ENCODE measurements at regions of chr1 and their contacts with region 1.

Region 1: DNA sequence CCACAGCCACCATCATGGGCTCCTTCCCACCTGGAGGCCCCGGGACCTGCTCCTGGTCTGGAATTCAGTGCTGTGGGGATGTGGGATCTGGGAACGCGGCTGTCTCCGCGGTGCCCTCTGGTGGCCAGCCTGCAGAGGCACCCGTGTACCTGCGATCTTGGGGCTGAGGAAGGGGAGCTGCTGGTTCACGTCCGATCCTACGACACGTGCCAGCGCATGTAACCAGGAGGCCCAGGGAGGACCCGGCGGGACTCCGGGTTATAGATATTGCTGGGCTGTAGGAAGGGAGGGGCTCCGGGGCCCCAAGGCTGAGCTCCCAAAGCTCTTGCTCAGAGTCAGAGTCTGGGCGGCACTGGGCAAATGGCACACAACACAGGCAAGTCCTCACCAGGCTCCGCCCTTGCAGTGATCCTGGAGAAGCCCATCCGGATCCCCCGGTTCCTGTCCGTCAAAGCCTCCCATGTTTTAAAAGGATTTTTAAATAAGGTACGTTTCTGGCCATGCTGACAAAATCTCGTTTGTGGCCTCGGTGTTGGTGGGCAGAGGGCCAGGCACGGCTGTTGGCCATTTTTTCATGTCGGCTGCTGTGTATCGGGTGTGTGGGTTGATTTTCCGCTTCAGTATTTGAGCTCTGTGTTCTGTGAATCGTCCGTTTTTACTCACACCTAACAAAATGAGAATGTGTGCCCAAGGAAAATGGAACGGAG is 20.1 kb downstream of the FAAP20 start:
- DNase-seq: peak; percentile 94
- H3K4me3 ChIP-seq: no peak overlapping the region
- H3K27ac ChIP-seq: no peak overlapping the region
- H3K4me1 ChIP-seq: peaks cover 0 to 2% of the 10 kb centered on the region in 2 experiments; a peak in 1 of 4 replicates
- H3K27me3 ChIP-seq: no peaks in the 10 kb centered on the region
- CTCF ChIP-seq: peak; percentile 80
- EP300 ChIP-seq: no peak
- RAD21 ChIP-seq: peak; percentile 62

Region 2: DNA sequence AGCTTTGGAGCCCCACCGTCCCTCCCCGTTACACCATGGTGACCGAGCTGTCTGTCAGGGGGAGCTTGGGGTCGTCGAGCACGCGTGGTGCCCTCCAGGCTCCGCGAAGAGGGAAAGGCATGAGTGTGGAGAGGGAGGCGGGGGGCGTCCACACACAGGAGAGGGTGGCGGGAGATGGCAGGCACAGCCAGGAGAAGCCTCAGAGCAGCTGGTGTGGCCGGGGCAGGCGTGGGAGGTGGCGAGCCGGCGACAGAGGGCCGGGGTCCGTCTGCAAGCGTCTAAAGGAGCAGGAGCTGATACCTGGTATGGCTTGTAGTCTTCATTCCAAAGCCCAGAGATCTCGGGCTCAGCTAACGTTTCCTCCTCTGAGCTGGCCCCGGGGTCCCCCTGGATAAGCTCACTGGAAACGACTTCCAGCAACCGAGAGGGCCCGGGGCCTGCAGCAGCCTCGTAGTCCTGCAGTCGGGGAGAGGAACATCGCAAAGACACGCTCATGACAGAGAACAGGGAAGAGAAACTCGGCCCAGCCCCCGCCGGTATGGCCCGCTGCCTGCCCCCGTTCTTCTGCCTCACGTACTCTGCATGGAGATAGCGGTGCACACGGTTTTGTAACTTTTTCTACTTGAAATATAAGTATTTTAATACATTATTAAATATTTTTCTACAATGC is 208.3 kb before region 1 on chr1:
- CTCF ChIA-PET with region 1: no interaction called
- POLR2A ChIA-PET with region 1: no interaction called
- DNase-seq: no peak
- H3K4me3 ChIP-seq: no peak overlapping the region
- H3K27ac ChIP-seq: no peak overlapping the region
- H3K4me1 ChIP-seq: no peaks in the 10 kb centered on the region
- H3K27me3 ChIP-seq: no peaks in the 10 kb centered on the region
- CTCF ChIP-seq: no peak
- EP300 ChIP-seq: no peak
- RAD21 ChIP-seq: no peak

Region 3: GRCh38 chr1:2112280-2112701 is 62.2 kb before region 1 on chr1:
- CTCF ChIA-PET with region 1: interaction called, 10 read pairs
- POLR2A ChIA-PET with region 1: no interaction called
- DNase-seq: no peak
- H3K4me3 ChIP-seq: no peak overlapping the region
- H3K27ac ChIP-seq: no peak overlapping the region
- H3K4me1 ChIP-seq: no peaks in the 10 kb centered on the region; a peak in 1 of 4 replicates
- H3K27me3 ChIP-seq: no peaks in the 10 kb centered on the region
- CTCF ChIP-seq: no peak
- EP300 ChIP-seq: no peak
- RAD21 ChIP-seq: no peak

Region 4: DNA sequence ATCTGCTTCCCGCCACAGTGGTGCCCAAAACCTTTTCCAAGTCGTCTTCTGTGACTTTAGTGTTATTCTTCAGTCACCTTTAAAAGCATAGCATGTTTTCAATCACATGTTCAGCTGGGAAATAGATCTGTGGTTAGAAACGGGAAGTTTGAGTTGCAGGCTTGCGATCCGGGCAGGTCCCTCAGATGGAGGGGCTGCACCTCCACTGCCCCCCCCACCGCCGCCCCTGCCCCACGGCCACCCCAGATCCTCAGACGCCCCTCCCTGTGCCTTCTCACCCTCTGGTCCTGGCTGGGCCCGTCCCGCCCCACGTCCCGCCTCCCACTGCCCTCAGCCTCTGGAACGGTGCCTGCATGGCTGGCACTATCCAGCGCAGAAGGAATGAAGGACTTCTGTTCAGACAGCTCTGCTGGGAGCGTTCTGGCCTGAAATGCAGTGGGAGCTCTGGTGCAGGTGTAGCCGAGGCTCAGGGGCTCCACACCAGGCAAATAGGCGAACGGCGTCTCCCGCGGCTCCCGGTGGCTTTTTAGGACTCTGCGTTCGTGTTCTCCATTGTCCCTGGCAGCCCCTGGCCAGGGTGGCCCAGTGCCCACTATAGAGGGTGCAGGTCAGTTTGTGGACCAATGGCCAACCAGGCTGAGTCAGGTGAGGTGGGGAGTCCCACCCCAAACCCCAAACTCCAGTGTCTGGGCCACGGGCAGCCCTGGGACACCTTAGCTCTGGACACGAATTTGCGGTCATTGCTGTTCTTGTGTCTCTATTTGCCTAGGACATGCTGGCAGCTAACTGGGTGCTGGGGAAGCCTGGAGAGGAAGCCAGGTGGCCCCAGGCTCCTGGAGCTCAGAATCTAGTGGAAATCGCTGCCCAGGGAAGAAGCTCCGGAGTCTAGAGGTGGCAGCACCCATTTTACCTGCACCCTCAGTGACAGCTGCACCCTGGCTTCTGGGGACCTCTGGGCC is 47.0 kb before region 1 on chr1:
- CTCF ChIA-PET with region 1: interaction called, 11 read pairs
- POLR2A ChIA-PET with region 1: no interaction called
- DNase-seq: no peak
- H3K4me3 ChIP-seq: no peak overlapping the region
- H3K27ac ChIP-seq: no peak overlapping the region
- H3K4me1 ChIP-seq: peaks cover 0 to 5% of the 10 kb centered on the region in 2 experiments; a peak in 2 of 4 replicates
- H3K27me3 ChIP-seq: no peaks in the 10 kb centered on the region
- CTCF ChIP-seq: no peak
- EP300 ChIP-seq: no peak
- RAD21 ChIP-seq: no peak

Region 5: GRCh38 chr1:2148691-2149090 is 25.8 kb before region 1 on chr1:
- CTCF ChIA-PET with region 1: interaction called, 65 read pairs
- POLR2A ChIA-PET with region 1: no interaction called
- DNase-seq: no peak
- H3K4me3 ChIP-seq: no peak overlapping the region
- H3K27ac ChIP-seq: no peak overlapping the region
- H3K4me1 ChIP-seq: no peaks in the 10 kb centered on the region
- H3K27me3 ChIP-seq: no peaks in the 10 kb centered on the region
- CTCF ChIP-seq: no peak
- EP300 ChIP-seq: no peak
- RAD21 ChIP-seq: no peak

Region 6: GRCh38 chr1:2163205-2163604 is 11.3 kb before region 1 on chr1:
- CTCF ChIA-PET with region 1: interaction called, 59 read pairs
- POLR2A ChIA-PET with region 1: no interaction called
- DNase-seq: no peak
- H3K4me3 ChIP-seq: no peak overlapping the region; a peak in 1 of 4 replicates
- H3K27ac ChIP-seq: no peak overlapping the region
- H3K4me1 ChIP-seq: no peaks in the 10 kb centered on the region; a peak in 1 of 4 replicates
- H3K27me3 ChIP-seq: no peaks in the 10 kb centered on the region
- CTCF ChIP-seq: no peak
- EP300 ChIP-seq: no peak
- RAD21 ChIP-seq: no peak

Region 7: DNA sequence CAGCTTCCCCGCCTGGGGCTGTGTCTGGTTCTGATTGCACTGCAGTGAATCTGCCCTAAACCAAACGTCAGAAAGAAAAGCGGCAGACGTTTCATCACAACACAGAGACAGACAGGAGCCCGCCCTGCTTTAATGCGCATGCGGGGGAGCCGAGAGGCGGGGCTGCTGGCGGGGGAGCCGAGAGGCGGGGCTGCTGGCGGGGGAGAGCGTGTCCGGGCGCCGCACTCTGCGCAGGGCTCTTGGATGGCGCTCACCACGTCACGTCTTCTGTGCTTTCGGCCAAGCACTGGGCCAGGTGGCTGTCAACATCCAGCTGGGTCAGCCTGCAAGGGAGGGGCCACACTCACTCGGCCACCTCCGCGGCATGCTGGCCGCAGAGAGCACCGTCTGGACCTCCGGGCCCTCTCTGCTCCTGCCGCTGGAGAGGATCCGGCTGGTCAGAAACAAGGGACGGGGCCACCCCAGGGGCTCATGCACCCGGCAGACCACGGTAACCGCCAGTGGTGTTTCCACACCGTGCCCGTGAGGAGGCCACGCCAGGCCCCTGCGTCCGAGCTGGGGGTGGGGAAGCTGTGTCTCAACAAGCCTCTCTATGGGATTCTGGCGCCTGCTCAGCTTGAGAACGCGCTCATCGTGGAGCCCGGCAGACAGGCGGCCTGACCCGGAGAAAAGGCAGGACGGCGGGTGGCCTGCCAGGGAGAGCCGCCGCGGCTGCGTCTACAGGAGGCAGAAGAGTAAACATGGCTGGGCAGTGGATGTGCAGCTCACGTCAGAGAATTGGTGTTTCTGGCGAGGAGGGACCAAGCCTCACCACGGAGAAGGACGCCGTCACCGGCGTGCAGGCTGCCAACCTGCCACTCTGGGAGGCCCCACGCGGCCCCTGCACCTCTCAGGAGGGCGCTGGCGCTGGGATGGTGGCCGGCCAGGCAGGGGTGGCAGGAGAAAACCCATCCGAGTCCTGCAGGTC is 15.2 kb after region 1 on chr1:
- CTCF ChIA-PET with region 1: interaction called, 53 read pairs
- POLR2A ChIA-PET with region 1: interaction called, 4 read pairs
- DNase-seq: peak; percentile 94
- H3K4me3 ChIP-seq: peak overlapping the region; percentile 40 to 58
- H3K27ac ChIP-seq: peak overlapping the region; percentile 66 to 93
- H3K4me1 ChIP-seq: peaks cover 0 to 38% of the 10 kb centered on the region in 2 experiments; a peak in 1 of 4 replicates
- H3K27me3 ChIP-seq: no peaks in the 10 kb centered on the region
- CTCF ChIP-seq: no peak
- EP300 ChIP-seq: peak in 1 of 2 experiments; percentile 57; a peak in 2 of 4 replicates
- RAD21 ChIP-seq: no peak

Region 8: GRCh38 chr1:2241820-2242219 is 67.3 kb after region 1 on chr1:
- CTCF ChIA-PET with region 1: no interaction called
- POLR2A ChIA-PET with region 1: no interaction called
- DNase-seq: no peak
- H3K4me3 ChIP-seq: no peak overlapping the region
- H3K27ac ChIP-seq: no peak overlapping the region
- H3K4me1 ChIP-seq: peaks cover 4 to 38% of the 10 kb centered on the region in 2 experiments; a peak in 1 of 4 replicates
- H3K27me3 ChIP-seq: no peaks in the 10 kb centered on the region
- CTCF ChIP-seq: no peak
- EP300 ChIP-seq: no peak
- RAD21 ChIP-seq: no peak

Region 9: DNA sequence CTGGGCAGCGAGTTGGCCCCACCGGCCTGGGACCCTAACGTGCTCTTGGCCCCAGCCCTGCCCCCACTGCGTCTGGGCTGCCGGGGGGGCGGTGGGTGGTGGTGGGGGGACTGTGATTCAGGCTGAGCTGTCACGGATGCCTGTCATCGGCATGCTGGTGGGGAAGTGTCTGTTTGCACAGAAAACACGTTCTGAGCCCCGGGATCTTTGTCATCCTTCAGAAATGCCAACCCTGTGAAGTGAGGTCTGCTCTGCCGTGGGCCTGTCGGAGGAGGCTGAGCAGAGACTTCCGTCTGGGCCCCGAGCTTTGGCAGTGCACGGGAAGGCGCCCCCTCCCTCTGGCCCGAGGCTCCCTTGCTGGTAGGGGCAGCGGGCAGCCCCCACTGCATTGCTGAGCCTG is 277.2 kb after region 1 on chr1:
- CTCF ChIA-PET with region 1: no interaction called
- POLR2A ChIA-PET with region 1: no interaction called
- DNase-seq: no peak
- H3K4me3 ChIP-seq: no peak overlapping the region
- H3K27ac ChIP-seq: peak overlapping the region in 1 of 2 experiments; percentile 64; a peak in 2 of 4 replicates
- H3K4me1 ChIP-seq: peaks cover 0 to 14% of the 10 kb centered on the region in 2 experiments; a peak in 1 of 4 replicates
- H3K27me3 ChIP-seq: no peaks in the 10 kb centered on the region
- CTCF ChIP-seq: no peak
- EP300 ChIP-seq: peak in 1 of 2 experiments; percentile 26; a peak in 1 of 4 replicates
- RAD21 ChIP-seq: no peak

Measured in SK-N-SH (cell line).